Mucosa of descending colon (tissue), 3 donors: ENCODE measurements at regions of chr7 and their contacts with region 1.

Region 1: GRCh38 chr7:150356265-150356897 is 12.2 kb upstream of the REPIN1 start:
- DNase-seq: no peak
- ATAC-seq: peak; percentile 23
- H3K4me3 ChIP-seq: no peak overlapping the region
- H3K4me1 ChIP-seq: peaks cover 11% of the 10 kb centered on the region
- CTCF ChIP-seq: peak; percentile 37

Region 2: GRCh38 chr7:149873074-149873969 is 483.1 kb before region 1 on chr7 and contains the start of gene ATP6V0E2:
- intact Hi-C with region 1: no loop called
- DNase-seq: peak; percentile 93 to 96 (median 95)
- ATAC-seq: peak; percentile 95
- H3K4me3 ChIP-seq: peak within 1 kb of the TSS; percentile 50
- H3K4me1 ChIP-seq: peaks cover 8% of the 10 kb centered on the region
- CTCF ChIP-seq: no peak
- total RNA-seq, gene ATP6V0E2: 12.7 to 23.7 (median 20.9) TPM

Region 3: DNA sequence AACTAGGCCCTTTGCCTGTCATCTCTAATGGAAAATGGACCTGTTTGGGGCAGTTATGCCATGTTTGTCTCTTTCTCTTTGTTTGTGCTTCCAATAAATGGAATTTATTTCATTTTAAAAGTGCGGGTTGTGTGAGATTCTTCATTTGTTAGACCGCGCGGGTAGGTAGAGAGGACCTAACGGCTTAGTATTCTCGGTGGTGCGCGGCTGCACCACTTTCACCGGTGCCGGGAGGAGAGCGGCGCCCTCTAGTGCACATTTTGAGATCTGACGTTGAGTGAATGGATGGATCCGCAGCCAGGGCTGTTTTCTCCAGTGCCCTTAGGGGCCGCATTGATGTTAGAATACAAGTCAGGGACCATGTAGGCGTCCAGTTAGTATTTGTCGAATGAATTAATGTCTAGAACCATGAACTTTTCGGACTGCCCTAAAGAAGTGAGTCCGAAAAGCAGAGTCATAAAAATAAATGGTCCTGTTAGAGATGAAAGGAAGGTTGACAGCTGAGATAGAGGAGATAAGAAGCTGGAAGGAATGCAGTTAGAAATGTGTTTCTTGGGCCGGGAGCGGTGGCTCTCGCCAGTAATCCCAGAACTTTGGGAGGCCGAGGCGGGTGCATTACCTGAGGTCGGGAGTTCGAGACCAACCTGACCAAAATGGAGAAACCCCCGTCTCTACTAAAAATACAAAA is 64.8 kb after region 1 on chr7:
- intact Hi-C with region 1: loop called in 1 of 2 experiments (anchors 5 kb)
- DNase-seq: peak; percentile 78 to 95 (median 87)
- ATAC-seq: peak; percentile 99
- H3K4me3 ChIP-seq: no peak overlapping the region
- H3K4me1 ChIP-seq: no peaks in the 10 kb centered on the region
- CTCF ChIP-seq: peak; percentile 69